ENCODE measurements at regions of chr13 and their contacts with region 1.

Region 1: DNA sequence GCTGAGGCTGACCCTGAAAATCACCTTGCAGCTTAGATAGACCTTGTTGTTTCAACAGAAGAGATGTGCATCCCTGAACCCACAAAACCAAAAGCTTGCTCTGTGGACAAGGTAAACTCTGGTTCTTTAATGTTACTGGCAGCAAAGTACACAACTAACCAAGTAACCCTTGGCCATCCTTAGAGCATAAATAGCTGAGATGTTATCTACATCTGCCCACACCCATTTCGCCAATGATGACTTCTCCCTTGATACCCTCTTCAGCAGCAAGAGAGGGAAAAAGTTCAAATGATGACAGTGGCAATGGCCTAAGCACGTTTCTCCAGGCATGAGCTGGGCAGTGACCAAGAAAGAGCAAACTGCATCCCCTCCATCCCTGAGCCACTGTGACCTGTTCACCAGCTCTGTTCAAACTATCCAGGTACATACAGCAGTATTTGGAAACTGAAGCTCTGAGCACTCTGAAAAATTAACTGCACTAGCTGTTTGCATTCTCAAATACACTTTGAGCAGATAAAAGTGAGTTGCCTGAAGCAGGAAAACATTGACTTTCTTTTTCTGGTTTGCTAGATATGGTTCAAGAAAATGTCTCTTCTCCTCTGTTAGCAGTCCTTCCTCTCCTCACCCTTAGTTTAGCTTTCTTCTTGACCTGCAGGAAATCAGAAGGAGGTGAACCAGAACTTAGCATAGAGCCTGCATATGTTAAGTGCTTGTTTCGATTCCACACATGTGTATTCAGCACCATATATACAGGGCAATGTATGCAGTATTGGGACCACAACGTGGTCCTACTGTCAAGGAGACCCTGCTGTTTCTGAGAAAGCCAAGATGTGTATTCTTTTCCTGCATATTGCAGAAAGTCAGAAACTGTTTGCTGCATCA is 231.7 kb downstream of the FOXO1 start:
- DNase-seq: no peak
- ATAC-seq: no peak

Region 2: DNA sequence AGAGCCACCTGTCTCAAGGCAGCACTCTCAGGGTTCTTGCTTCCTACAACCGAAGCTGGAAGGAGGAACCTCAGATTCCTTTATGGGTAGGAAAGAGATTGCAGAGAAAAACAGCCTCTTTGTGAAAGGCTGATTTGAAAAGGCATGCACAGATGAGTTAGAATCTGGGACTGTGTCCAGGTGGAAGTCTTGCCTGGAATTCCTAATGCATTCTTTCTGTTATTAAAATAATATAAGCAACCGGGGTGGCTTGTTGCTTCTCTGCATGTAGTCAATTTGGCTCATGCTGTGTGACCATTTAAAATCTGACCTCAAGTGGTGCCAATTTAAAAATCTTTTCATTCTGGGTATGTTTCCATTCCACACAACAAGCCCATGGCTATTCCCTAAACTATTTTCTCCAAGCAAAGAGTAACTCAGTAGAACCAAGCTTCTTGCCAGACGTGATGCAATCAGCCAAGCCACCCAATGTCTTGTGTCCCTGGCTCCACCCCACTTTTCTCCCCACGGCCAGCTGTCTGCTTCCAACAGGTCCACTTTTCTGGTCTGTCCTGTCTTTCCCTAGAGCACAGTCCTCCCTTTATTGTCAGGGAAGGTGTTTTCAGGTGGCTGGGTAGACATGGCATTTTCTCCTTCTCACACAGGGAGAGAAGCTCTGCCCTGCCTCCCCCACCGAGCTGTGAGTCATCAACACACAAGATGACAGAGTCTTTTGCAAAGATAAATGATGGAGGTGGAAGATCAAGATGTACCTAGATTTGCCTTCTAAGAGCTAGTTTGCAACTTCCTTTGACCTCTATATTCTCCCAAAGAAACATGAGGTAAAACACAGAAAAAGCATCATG is 162.6 kb before region 1 on chr13:
- intact Hi-C with region 1: no loop called
- DNase-seq: peak; percentile 86
- ATAC-seq: peak; percentile 93

Region 3: DNA sequence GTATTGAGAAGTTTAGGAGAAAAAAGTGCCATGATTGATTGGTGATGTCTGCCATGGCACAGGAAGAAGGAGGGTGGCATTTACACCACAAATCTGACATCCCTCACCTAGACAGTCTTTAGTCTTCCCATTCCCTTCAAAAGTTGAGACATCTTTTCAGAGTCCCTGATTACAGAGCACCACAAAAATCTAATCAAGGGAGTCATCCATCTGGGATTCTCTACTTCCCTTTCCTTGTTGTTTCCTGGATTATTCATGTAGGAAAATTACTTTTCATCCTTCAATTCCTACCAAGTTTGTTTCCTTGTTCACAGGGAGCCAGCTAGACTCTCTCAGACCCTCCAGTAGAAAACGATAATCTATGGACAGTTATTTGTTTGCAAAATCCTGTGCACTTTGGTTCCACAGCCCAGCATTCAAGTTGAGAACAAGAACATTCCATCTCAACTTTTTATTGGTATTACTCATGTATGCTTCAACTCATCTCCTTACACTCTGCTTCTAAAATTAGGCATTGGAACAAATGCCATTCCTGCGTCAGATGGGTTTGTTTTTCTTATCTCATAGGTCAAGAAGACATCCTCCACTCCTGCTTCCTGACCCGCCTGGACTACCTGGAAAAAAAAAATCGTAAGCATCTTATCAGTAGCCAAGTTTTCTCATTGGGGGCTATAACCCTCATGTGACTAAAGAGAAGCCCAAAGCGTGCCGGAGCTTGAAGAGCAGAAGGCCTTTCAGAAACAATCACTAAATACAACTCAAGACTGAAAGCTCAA is 28.2 kb before region 1 on chr13:
- intact Hi-C with region 1: no loop called
- DNase-seq: no peak
- ATAC-seq: no peak

Region 4: DNA sequence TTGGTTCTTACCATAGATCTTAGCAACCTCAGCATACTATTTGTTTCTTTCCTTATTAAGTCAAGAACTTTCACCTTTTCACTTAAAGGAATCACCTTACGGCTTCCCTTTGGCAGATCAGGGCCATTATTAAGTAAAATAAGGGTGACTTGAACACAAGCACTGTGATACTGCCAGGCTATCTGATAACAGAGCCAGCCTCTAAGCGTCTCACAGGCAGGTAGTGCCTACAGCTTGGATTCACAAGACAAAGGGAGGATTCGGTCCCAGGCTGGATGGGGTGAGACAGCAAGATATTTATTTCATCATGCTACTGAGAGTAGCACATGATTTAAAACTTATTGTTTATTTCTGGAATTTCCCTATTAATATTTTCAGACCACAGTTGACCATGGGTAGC is 13.1 kb after region 1 on chr13:
- intact Hi-C with region 1: loop called (anchors 1 kb)
- DNase-seq: no peak
- ATAC-seq: no peak